B cell (primary cell): ENCODE measurements at regions of chr2 and their contacts with region 1.

Region 1: GRCh38 chr2:73176881-73177644 is 25.3 kb upstream of the NOTO start:
- DNase-seq: peak; percentile 92
- ATAC-seq: peak; percentile 93
- H3K4me3 ChIP-seq: peak overlapping the region; percentile 51 to 76 (median 64)
- H3K4me3 Mint-ChIP-seq: peak overlapping the region; percentile 94
- H3K27ac ChIP-seq: no peak overlapping the region
- H3K27ac Mint-ChIP-seq: peak overlapping the region; percentile 41
- H3K4me1 ChIP-seq: peaks cover 24 to 28% of the 10 kb centered on the region in 2 donors
- H3K4me1 Mint-ChIP-seq: peaks cover 16% of the 10 kb centered on the region
- H3K27me3 ChIP-seq: peaks cover 0 to 58% (median 16%) of the 10 kb centered on the region in 4 experiments
- H3K27me3 Mint-ChIP-seq: peaks cover 59% of the 10 kb centered on the region
- CTCF ChIP-seq: peak; percentile 98

Region 2: GRCh38 chr2:72770879-72771461 is 406.1 kb before region 1 on chr2:
- CTCF ChIA-PET with region 1: interaction called, 11 read pairs
- POLR2A ChIA-PET with region 1: no interaction called
- intact Hi-C with region 1: loop called (anchors 10 kb)
- DNase-seq: peak; percentile 72
- ATAC-seq: no peak
- H3K4me3 ChIP-seq: no peak overlapping the region
- H3K4me3 Mint-ChIP-seq: no peak overlapping the region
- H3K27ac ChIP-seq: no peak overlapping the region
- H3K27ac Mint-ChIP-seq: no peak overlapping the region
- H3K4me1 ChIP-seq: no peaks in the 10 kb centered on the region
- H3K4me1 Mint-ChIP-seq: no peaks in the 10 kb centered on the region
- H3K27me3 ChIP-seq: no peaks in the 10 kb centered on the region
- H3K27me3 Mint-ChIP-seq: no peaks in the 10 kb centered on the region
- CTCF ChIP-seq: peak; percentile 97

Region 3: DNA sequence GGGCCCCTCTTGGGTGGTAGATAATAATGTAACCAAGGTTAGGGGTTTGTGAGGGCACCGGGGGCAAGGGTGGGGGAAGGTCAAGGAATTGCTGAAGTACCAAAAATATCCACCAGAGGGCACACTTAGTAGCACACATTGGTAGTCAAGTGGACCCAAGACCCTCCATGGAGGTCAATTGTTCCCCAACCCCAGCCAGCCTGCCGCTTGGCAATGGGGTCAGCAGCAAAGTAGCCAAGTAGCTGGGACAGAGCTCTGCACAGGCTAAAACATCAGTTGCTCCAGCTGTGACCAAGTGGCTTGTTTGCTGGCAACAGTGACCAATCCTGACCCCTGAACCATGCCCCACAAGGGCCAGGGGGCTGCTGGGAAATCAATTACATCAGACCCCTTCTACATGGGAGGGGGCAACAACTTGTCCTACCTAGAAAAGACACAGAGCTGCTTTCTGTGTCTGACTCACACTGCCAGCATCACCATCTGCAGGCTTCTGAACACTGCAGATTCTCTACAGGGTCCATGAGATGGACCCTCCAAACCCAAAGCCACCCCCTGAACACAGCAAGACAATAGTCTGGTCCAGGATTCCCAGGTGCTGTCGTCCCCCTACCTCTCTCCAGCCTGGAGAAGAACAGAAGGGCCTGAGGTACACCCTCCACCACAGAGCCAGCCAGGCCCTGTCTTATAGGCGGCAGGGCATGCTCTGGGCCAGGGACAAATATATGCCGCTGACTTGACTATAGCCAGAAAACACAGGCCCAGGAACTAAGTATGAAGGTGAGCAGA is 183.7 kb before region 1 on chr2:
- CTCF ChIA-PET with region 1: interaction called, 137 read pairs
- POLR2A ChIA-PET with region 1: no interaction called
- intact Hi-C with region 1: no loop called
- DNase-seq: peak; percentile 75
- ATAC-seq: peak; percentile 63
- H3K4me3 ChIP-seq: no peak overlapping the region
- H3K4me3 Mint-ChIP-seq: no peak overlapping the region
- H3K27ac ChIP-seq: no peak overlapping the region
- H3K27ac Mint-ChIP-seq: no peak overlapping the region
- H3K4me1 ChIP-seq: no peaks in the 10 kb centered on the region
- H3K4me1 Mint-ChIP-seq: no peaks in the 10 kb centered on the region
- H3K27me3 ChIP-seq: no peaks in the 10 kb centered on the region
- H3K27me3 Mint-ChIP-seq: no peaks in the 10 kb centered on the region
- CTCF ChIP-seq: peak; percentile 91

Region 4: GRCh38 chr2:73085691-73086360 is 91.2 kb before region 1 on chr2:
- CTCF ChIA-PET with region 1: interaction called, 62 read pairs
- POLR2A ChIA-PET with region 1: no interaction called
- intact Hi-C with region 1: loop called (anchors 1 kb)
- DNase-seq: peak; percentile 80
- ATAC-seq: peak; percentile 90
- H3K4me3 ChIP-seq: no peak overlapping the region
- H3K4me3 Mint-ChIP-seq: no peak overlapping the region
- H3K27ac ChIP-seq: no peak overlapping the region
- H3K27ac Mint-ChIP-seq: no peak overlapping the region
- H3K4me1 ChIP-seq: no peaks in the 10 kb centered on the region
- H3K4me1 Mint-ChIP-seq: no peaks in the 10 kb centered on the region
- H3K27me3 ChIP-seq: peaks cover 0 to 4% (median 2%) of the 10 kb centered on the region in 4 experiments
- H3K27me3 Mint-ChIP-seq: peaks cover 11% of the 10 kb centered on the region
- CTCF ChIP-seq: peak; percentile 78

Region 5: GRCh38 chr2:73142937-73143336 is 34.1 kb before region 1 on chr2:
- CTCF ChIA-PET with region 1: no interaction called
- POLR2A ChIA-PET with region 1: no interaction called
- intact Hi-C with region 1: no loop called
- DNase-seq: no peak
- ATAC-seq: no peak
- H3K4me3 ChIP-seq: no peak overlapping the region
- H3K4me3 Mint-ChIP-seq: no peak overlapping the region
- H3K27ac ChIP-seq: no peak overlapping the region
- H3K27ac Mint-ChIP-seq: no peak overlapping the region
- H3K4me1 ChIP-seq: no peaks in the 10 kb centered on the region
- H3K4me1 Mint-ChIP-seq: no peaks in the 10 kb centered on the region
- H3K27me3 ChIP-seq: no peaks in the 10 kb centered on the region
- H3K27me3 Mint-ChIP-seq: peaks cover 27% of the 10 kb centered on the region
- CTCF ChIP-seq: no peak

Region 6: DNA sequence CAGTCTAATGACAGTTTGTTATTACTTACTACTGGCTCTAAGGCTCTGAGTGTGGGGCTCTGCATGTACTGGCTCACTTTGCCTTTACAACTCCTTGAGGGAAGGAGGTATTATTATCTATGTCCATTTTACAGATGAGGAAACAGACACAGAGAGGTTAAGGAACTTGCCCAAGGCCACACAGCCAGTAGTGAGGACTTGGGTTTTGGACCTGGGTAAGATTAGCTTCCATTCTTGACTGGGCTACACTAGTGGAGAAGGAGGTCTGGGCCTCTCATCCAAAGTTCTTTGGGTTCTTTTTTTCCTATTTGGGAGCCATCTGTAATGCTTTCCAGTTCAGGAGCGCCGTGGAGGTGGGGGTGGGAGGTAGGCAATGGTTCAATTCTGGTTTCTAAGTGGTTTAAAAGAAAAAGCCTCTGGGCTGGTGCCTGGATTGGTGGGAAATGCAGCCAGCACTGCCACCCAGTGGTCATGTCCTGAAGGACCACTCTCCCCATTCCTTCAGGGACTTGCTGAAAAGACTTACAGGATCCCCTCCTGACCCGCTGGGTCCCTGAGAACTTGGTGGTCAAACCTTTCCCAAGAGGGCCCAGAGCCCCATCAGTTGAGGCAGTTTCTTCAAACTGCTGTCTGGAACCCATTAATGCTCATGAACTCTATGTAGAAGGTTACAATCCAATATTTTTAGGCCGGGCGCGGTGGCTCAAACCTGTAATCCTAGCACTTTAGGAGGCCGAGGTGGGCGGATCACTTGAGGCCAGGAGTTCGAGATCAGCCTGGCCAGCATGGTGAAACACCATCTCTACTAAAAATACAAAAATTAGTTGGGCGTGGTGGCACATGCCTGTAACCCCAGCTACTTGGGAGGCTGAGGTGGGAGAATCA is 13.3 kb before region 1 on chr2:
- CTCF ChIA-PET with region 1: interaction called, 16 read pairs
- POLR2A ChIA-PET with region 1: interaction called, 4 read pairs
- intact Hi-C with region 1: loop called (anchors 2 kb)
- DNase-seq: peak; percentile 71
- ATAC-seq: peak; percentile 84
- H3K4me3 ChIP-seq: no peak overlapping the region
- H3K4me3 Mint-ChIP-seq: no peak overlapping the region
- H3K27ac ChIP-seq: no peak overlapping the region
- H3K27ac Mint-ChIP-seq: no peak overlapping the region
- H3K4me1 ChIP-seq: no peaks in the 10 kb centered on the region
- H3K4me1 Mint-ChIP-seq: no peaks in the 10 kb centered on the region
- H3K27me3 ChIP-seq: peaks cover 0 to 3% (median 0%) of the 10 kb centered on the region in 4 experiments
- H3K27me3 Mint-ChIP-seq: peaks cover 24% of the 10 kb centered on the region
- CTCF ChIP-seq: peak; percentile 82

Region 7: GRCh38 chr2:73233154-73233931 is 56.3 kb after region 1 on chr2 and contains the start of gene PRADC1:
- CTCF ChIA-PET with region 1: interaction called, 18 read pairs
- POLR2A ChIA-PET with region 1: no interaction called
- intact Hi-C with region 1: loop called (anchors 1 kb)
- DNase-seq: peak; percentile 97
- ATAC-seq: peak; percentile 85
- H3K4me3 ChIP-seq: peak within 1 kb of the TSS; percentile 89 to 99 (median 94)
- H3K4me3 Mint-ChIP-seq: peak within 1 kb of the TSS; percentile 99
- H3K27ac ChIP-seq: peak within 1 kb of the TSS; percentile 87 to 90
- H3K27ac Mint-ChIP-seq: peak within 1 kb of the TSS; percentile 93
- H3K4me1 ChIP-seq: peaks cover 18 to 20% of the 10 kb centered on the region in 2 donors
- H3K4me1 Mint-ChIP-seq: peaks cover 38% of the 10 kb centered on the region
- H3K27me3 ChIP-seq: no peaks in the 10 kb centered on the region
- H3K27me3 Mint-ChIP-seq: no peaks in the 10 kb centered on the region
- CTCF ChIP-seq: no peak
- total RNA-seq, gene PRADC1: 2.3 and 4.2 TPM in 2 replicates